Activated CD4-positive, alpha-beta T cell treated with anti-CD3 and anti-CD28 coated beads for 36 hours (primary cell): ENCODE measurements at regions of chr6 and their contacts with region 1.

Region 1: GRCh38 chr6:41182069-41183034 is 18.6 kb downstream of the TREML2 start:
- DNase-seq: peak; percentile 66
- ATAC-seq: peak; percentile 98
- H3K4me3 Mint-ChIP-seq: no peak overlapping the region
- H3K27ac Mint-ChIP-seq: no peak overlapping the region
- H3K4me1 Mint-ChIP-seq: peaks cover 11% of the 10 kb centered on the region
- H3K27me3 Mint-ChIP-seq: no peaks in the 10 kb centered on the region

Region 2: DNA sequence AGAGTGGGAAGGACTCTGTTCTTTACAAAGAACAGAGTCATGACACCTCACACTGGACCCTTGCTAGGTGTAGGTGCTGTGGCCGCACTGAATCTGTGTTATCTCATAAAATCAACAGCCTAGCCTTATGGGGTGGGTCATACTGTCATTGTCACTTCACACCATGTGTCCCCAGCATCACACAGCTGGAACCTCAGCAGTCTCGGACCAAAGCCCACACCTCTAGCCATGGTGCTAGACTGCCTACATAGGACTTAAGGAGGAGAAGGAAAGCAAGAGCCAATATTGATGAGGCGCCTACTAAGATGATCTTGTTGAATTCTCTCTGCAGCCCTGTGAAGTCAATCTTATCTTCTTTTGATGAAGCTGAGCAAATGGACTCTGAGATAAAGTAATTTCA is 174.3 kb before region 1 on chr6:
- CTCF ChIA-PET with region 1: no interaction called
- POLR2A ChIA-PET with region 1: no interaction called
- intact Hi-C with region 1: loop called in 1 of 2 experiments (anchors 5 kb)
- DNase-seq: no peak
- ATAC-seq: no peak
- H3K4me3 Mint-ChIP-seq: no peak overlapping the region
- H3K27ac Mint-ChIP-seq: no peak overlapping the region
- H3K4me1 Mint-ChIP-seq: no peaks in the 10 kb centered on the region
- H3K27me3 Mint-ChIP-seq: peaks cover 11% of the 10 kb centered on the region

Region 3: GRCh38 chr6:41092421-41093140 is 89.8 kb before region 1 on chr6:
- CTCF ChIA-PET with region 1: interaction called, 15 read pairs
- POLR2A ChIA-PET with region 1: no interaction called
- intact Hi-C with region 1: loop called (anchors 1 to 5 kb)
- DNase-seq: no peak
- ATAC-seq: peak; percentile 36
- H3K4me3 Mint-ChIP-seq: no peak overlapping the region
- H3K27ac Mint-ChIP-seq: no peak overlapping the region
- H3K4me1 Mint-ChIP-seq: no peaks in the 10 kb centered on the region
- H3K27me3 Mint-ChIP-seq: no peaks in the 10 kb centered on the region

Region 4: DNA sequence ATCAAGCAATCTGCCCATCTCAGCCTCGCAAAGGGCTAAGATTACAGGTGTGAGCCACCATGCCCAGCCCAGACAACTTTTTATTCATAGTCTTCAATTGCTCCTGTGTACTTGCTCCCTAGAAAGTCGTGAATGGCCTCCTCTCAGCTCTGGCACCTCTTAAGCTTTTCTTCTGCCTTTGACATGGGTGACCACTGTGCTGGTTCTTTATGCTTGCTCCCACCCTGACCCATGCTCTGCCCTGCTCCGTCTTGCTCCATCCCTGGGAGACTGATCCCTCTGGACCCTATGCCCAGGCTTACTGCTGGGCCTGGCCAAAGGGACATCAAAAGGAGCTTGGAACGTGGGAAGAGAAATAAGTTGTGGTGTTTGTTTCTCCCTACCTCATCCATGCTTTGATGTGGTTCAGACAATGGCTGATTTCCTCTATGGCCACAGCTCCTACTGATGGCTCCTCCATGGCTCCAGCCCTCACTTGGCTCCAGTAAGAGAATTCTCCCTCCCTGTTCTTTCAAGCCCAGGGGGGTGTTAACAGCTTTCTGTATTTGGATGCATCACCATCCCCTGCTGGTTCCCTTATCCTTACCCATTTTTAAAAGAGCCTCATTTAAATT is 11.7 kb before region 1 on chr6:
- CTCF ChIA-PET with region 1: interaction called, 12 read pairs
- POLR2A ChIA-PET with region 1: no interaction called
- intact Hi-C with region 1: no loop called
- DNase-seq: no peak
- ATAC-seq: no peak
- H3K4me3 Mint-ChIP-seq: no peak overlapping the region
- H3K27ac Mint-ChIP-seq: no peak overlapping the region
- H3K4me1 Mint-ChIP-seq: peaks cover 3% of the 10 kb centered on the region
- H3K27me3 Mint-ChIP-seq: peaks cover 2% of the 10 kb centered on the region

Region 5: GRCh38 chr6:41200296-41200900 is 18.0 kb after region 1 on chr6:
- CTCF ChIA-PET with region 1: interaction called, 15 read pairs
- POLR2A ChIA-PET with region 1: interaction called, 3 read pairs
- intact Hi-C with region 1: no loop called
- DNase-seq: peak; percentile 78
- ATAC-seq: peak; percentile 56
- H3K4me3 Mint-ChIP-seq: peak overlapping the region; percentile 71
- H3K27ac Mint-ChIP-seq: peak overlapping the region; percentile 93
- H3K4me1 Mint-ChIP-seq: peaks cover 55% of the 10 kb centered on the region
- H3K27me3 Mint-ChIP-seq: no peaks in the 10 kb centered on the region

Region 6: DNA sequence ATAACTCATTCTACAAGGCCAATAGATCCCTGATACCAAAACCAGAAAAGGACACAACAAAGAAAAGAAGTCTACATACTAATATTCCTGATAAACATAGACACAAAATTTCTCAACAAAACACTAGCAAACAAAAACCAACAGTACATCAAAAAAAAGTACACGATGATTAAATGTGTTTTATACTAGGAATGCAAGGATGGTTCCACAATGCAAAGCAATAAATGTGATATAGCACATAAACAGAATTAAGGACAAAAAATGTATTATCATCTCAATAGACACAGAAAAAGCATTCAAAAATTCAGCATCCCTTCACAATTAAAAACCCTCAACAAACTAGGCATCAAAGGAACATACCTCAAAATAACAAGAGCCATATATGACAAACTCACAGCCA is 80.9 kb after region 1 on chr6:
- CTCF ChIA-PET with region 1: no interaction called
- POLR2A ChIA-PET with region 1: no interaction called
- intact Hi-C with region 1: no loop called
- DNase-seq: no peak
- ATAC-seq: no peak
- H3K4me3 Mint-ChIP-seq: no peak overlapping the region
- H3K27ac Mint-ChIP-seq: no peak overlapping the region
- H3K4me1 Mint-ChIP-seq: no peaks in the 10 kb centered on the region
- H3K27me3 Mint-ChIP-seq: no peaks in the 10 kb centered on the region